CD8-positive, alpha-beta T cell (primary cell): ENCODE measurements at regions of chr16 and their contacts with region 1.

Region 1: GRCh38 chr16:48687421-48688038 is 77.5 kb upstream of the N4BP1 start:
- DNase-seq: peak in 2 of 9 experiments; percentile 13 to 30
- ATAC-seq: peak; percentile 29
- H3K4me3 ChIP-seq: no peak overlapping the region
- H3K4me3 Mint-ChIP-seq: no peak overlapping the region
- H3K27ac ChIP-seq: no peak overlapping the region
- H3K27ac Mint-ChIP-seq: no peak overlapping the region
- H3K4me1 ChIP-seq: no peaks in the 10 kb centered on the region
- H3K4me1 Mint-ChIP-seq: peaks cover 5% of the 10 kb centered on the region
- H3K27me3 ChIP-seq: no peaks in the 10 kb centered on the region
- H3K27me3 Mint-ChIP-seq: peaks cover 21% of the 10 kb centered on the region
- CTCF ChIP-seq: peak; percentile 30

Region 2: DNA sequence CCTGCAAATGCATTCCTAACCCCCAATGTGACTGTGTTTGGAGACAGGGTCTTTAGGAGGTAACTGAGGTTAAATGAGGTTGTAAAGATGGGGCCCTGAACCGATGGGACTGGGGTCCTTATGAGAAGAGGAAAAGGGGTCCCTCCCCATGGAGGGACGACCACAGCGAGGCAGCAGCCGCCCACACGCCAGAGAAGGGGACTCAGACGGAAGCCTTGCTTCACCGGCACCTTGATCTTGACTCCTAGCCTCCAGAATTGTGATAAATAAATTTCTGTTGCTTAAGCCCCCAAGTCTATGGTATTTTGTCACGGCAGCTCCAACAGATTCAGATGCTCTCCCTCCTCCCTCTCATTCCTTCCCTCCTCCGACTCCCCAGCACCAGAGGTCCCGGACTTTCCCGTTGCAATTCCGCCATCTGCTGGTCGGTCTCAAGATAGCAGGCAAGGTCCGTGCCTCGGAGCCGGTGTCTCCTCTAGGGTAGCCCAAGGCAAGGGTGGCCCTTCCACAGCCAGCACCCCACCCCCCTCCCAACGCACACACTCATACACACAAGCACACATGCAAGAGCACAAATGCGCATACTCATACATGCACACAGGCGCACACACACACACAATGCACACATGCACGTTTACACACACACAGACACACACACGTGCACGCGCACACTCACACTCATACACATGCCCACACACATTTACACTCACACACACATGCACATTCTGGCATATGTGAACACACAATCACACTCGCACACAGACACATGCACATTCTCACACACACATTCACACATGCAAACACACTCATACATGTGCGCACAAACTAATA is 663.0 kb after region 1 on chr16:
- CTCF ChIA-PET with region 1: no interaction called
- POLR2A ChIA-PET with region 1: no interaction called
- intact Hi-C with region 1: loop called in 1 of 2 experiments (anchors 5 kb)
- DNase-seq: peak in 7 of 9 experiments; percentile 7 to 38 (median 28)
- ATAC-seq: no peak
- H3K4me3 ChIP-seq: no peak overlapping the region
- H3K4me3 Mint-ChIP-seq: no peak overlapping the region
- H3K27ac ChIP-seq: no peak overlapping the region
- H3K27ac Mint-ChIP-seq: no peak overlapping the region
- H3K4me1 ChIP-seq: no peaks in the 10 kb centered on the region
- H3K4me1 Mint-ChIP-seq: no peaks in the 10 kb centered on the region
- H3K27me3 ChIP-seq: peaks cover 0 to 2% of the 10 kb centered on the region in 2 experiments
- H3K27me3 Mint-ChIP-seq: peaks cover 23% of the 10 kb centered on the region
- CTCF ChIP-seq: peak; percentile 20